Activated T-helper 1 cell treated with anti-CD3 and anti-CD28 coated beads, Interleukin-12 subunit alpha, Interleukin-12 subunit beta, Interleukin-2, Interleukin-4 antibody, amounts not matched to agents 30 ng/mL and 10 ng/mL and 1 ng/mL, durations not matched to agents 14 hours and 24 hours and 36 hours (primary cell): ENCODE measurements at regions of chr2 and their contacts with region 1.

Region 1: DNA sequence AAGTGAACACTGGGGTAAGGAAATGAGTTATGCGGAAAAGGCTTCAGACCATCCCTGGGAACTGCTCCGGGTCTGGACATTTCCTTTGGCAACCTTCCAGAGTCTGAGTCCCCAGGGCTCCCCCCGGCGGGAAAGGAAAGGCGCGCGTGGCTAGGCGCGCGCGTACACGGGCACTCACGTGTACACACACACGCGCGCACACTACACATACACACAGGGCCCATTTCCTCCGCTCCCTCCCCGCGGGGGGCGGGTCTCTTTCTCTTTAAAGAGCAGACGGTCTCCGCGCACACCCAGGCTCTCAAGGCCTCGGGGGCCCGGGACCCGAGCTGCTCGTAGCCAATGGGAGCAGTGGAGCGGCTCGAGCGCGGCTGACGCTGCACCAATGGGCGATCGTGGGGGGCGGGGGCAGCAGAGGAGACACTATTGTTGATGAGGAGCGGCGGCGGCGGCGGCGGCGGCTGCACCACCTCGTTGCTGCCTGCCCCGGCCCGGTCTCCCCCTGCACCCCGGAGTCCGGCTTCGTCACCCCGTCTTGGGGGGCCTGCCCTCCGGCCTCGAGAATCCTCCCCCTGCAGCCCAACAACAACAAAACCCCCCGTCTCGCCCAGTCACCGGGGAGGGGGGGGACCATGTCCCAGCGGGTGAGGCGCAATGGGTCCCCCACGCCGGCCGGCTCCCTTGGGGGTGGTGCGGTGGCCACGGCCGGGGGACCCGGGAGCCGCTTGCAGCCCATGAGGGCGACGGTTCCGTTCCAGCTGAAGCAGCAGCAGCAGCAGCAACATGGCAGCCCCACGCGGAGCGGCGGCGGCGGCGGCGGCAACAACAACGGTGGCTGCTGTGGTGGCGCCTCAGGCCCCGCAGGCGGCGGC is at the start of gene FAM117B:
- DNase-seq: peak; percentile 98
- H3K4me3 Mint-ChIP-seq: peak within 1 kb of the TSS; percentile 91
- H3K27ac Mint-ChIP-seq: peak within 1 kb of the TSS; percentile 89
- H3K4me1 Mint-ChIP-seq: peaks cover 45% of the 10 kb centered on the region
- H3K27me3 Mint-ChIP-seq: no peaks in the 10 kb centered on the region
- total RNA-seq, gene FAM117B: 9.3 and 9.5 TPM in 2 replicates

Region 2: GRCh38 chr2:202278944-202279343 is 355.8 kb before region 1 on chr2:
- intact Hi-C with region 1: loop called (anchors 5 kb)
- DNase-seq: no peak
- H3K4me3 Mint-ChIP-seq: peak overlapping the region; percentile 7
- H3K27ac Mint-ChIP-seq: peak overlapping the region; percentile 92
- H3K4me1 Mint-ChIP-seq: peaks cover 24% of the 10 kb centered on the region
- H3K27me3 Mint-ChIP-seq: no peaks in the 10 kb centered on the region

Region 3: DNA sequence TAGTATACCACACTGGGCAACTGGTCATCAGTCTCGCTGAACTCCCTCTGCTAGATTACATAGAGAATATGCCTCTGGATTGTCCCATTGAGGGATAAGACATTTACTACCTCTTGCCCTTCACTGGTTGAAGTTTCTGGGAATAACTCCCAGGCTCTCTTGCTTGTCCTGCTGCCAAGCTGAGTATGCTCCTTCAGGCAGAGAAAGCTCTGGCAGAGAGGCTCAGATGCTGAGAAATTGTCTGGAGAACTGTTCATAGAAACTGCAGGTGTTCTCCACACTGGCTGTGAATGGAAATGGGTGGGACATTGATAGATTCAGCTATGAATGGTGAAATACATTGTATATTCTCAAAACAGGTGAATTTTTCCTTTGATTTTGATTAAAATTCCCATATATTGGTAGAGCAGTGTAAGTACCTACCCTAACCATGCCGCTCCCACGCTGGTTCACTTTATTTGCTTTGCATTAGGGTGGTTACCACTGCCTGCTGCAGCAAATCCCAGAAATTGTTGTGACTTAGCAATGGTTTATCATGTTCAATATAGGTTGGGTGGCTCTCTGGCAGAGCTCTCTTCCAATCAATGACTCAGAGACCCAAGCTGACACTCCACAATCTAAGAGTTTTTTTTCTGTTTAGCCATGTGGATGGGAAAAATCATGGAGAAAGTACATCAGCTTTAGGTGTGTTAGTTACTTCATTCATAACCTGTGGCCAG is 36.7 kb after region 1 on chr2:
- intact Hi-C with region 1: loop called (anchors 1 kb)
- DNase-seq: no peak
- H3K4me3 Mint-ChIP-seq: no peak overlapping the region
- H3K27ac Mint-ChIP-seq: no peak overlapping the region
- H3K4me1 Mint-ChIP-seq: peaks cover 34% of the 10 kb centered on the region
- H3K27me3 Mint-ChIP-seq: no peaks in the 10 kb centered on the region

Region 4: DNA sequence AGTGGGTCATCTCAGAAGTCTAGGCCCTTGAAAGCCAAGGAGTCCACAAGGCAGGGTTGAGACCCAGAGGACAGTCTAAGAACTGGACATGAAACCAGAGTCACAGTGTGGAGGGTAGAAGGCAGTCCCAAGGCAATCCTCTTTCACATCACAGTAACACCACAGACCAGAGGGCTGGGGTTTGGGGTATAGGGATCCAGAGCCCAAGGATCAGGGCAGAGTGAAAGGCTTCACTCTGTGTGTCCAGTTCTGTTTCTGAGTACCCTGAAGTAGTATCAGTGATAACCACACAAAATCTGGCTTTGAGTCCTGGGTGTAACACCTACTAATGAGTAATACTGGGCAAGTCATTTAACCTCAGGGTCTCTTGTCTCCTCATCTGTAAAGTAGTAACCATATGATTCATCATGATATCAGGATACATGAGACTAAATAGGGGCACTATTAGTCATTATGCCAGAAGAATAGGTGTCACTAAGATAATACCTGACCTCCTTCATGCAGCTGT is 145.8 kb after region 1 on chr2:
- intact Hi-C with region 1: loop called (anchors 5 kb)
- DNase-seq: no peak
- H3K4me3 Mint-ChIP-seq: no peak overlapping the region
- H3K27ac Mint-ChIP-seq: no peak overlapping the region
- H3K4me1 Mint-ChIP-seq: peaks cover 9% of the 10 kb centered on the region
- H3K27me3 Mint-ChIP-seq: no peaks in the 10 kb centered on the region

Region 5: DNA sequence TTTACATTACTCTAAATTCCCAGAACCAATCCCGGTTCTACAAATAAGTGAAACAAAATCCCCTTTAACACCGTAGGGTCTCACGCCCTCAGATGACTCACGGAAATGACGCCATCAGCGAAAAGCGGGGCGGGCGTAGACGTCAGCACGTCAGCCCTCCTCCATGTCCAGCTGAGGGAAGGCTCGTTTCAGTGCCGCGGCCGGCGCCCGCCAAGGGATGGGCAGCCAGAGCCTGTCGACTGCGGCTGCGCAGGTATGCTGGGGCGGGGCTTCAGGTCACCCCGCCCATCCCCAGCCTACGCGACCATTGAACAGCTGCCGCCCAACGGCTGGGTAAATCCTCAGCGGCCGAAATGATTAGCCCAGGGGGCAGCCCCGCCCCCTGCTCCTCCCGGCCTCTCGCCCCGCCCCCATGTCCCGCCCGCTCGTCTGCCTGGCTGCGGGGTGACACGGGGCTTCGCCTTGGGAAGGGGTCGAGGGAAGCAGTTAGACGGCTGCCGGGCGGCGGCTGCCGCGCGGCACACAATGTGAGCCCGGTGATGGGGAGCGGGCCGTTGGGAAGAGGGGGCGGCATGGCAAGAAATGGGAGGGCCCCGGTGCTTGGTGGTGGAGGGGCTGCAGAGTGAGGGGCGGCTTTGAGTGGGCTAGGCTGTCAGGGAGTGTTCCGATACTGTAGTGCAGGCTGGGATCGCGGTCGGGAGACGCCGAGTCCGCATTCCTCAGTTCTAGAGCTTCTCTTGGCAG is 379.8 kb after region 1 on chr2 and contains the start of gene NBEAL1:
- intact Hi-C with region 1: loop called (anchors 1 kb)
- DNase-seq: peak; percentile 97
- H3K4me3 Mint-ChIP-seq: peak within 1 kb of the TSS; percentile 94
- H3K27ac Mint-ChIP-seq: peak within 1 kb of the TSS; percentile 87
- H3K4me1 Mint-ChIP-seq: peaks cover 31% of the 10 kb centered on the region
- H3K27me3 Mint-ChIP-seq: peaks cover 4% of the 10 kb centered on the region
- total RNA-seq, gene NBEAL1: 9.2 and 10.7 TPM in 2 replicates